ENCODE measurements at regions of chr4 and their contacts with region 1.

Region 1: DNA sequence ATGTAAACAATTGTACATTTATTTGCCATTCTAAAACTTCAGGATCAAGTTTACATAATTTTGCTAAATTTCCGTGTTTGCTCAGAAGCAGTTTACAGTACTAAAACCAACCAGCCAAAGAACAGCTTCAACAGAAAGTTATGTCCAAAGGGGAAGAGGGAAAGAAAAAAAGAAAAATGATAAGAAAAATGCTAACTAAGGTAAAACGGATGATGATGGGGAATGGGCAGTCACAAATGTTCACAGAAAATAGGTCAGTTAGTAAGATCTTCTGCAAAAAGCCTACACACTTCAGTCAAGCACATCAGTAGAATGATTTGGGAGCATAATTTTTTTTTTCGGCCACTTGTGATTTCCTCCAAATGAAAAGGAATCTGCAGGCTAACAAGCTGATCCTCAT is 6.3 kb upstream of the COX18 start:
- DNase-seq: no peak
- H3K4me3 ChIP-seq: no peak overlapping the region
- H3K27ac ChIP-seq: no peak overlapping the region
- H3K4me1 ChIP-seq: no peaks in the 10 kb centered on the region
- H3K27me3 ChIP-seq: no peaks in the 10 kb centered on the region
- CTCF ChIP-seq: no peak
- POLR2A ChIP-seq: no peak

Region 2: GRCh38 chr4:72410158-72410557 is 665.7 kb before region 1 on chr4:
- CTCF ChIA-PET with region 1: no interaction called
- POLR2A ChIA-PET with region 1: no interaction called
- dilution Hi-C with region 1: no loop called
- intact Hi-C with region 1: no loop called
- DNase-seq: no peak
- H3K4me3 ChIP-seq: no peak overlapping the region
- H3K27ac ChIP-seq: no peak overlapping the region
- H3K4me1 ChIP-seq: no peaks in the 10 kb centered on the region
- H3K27me3 ChIP-seq: no peaks in the 10 kb centered on the region
- CTCF ChIP-seq: no peak
- POLR2A ChIP-seq: no peak

Region 3: GRCh38 chr4:73087871-73088270 is 12.0 kb after region 1 on chr4:
- CTCF ChIA-PET with region 1: interaction called, 8 read pairs
- POLR2A ChIA-PET with region 1: no interaction called
- dilution Hi-C with region 1: no loop called
- intact Hi-C with region 1: loop called (anchors 2 kb)
- DNase-seq: no peak
- H3K4me3 ChIP-seq: no peak overlapping the region
- H3K27ac ChIP-seq: no peak overlapping the region
- H3K4me1 ChIP-seq: no peaks in the 10 kb centered on the region
- H3K27me3 ChIP-seq: no peaks in the 10 kb centered on the region
- CTCF ChIP-seq: no peak
- POLR2A ChIP-seq: no peak

Measured in endothelial cell of umbilical vein (primary cell).